Ascending aorta (tissue), 2 donors: ENCODE measurements at regions of chr15 and their contacts with region 1.

Region 1: GRCh38 chr15:76190834-76191538 is 120.3 kb downstream of the ETFA start:
- DNase-seq: peak; percentile 39 to 85
- H3K4me3 ChIP-seq: peak overlapping the region in 1 of 2 donors; percentile 32
- H3K27ac ChIP-seq: no peak overlapping the region
- H3K4me1 ChIP-seq: peaks cover 5% of the 10 kb centered on the region in 2 donors
- H3K27me3 ChIP-seq: no peaks in the 10 kb centered on the region
- CTCF ChIP-seq: peak; percentile 76 to 90 (median 88)

Region 2: DNA sequence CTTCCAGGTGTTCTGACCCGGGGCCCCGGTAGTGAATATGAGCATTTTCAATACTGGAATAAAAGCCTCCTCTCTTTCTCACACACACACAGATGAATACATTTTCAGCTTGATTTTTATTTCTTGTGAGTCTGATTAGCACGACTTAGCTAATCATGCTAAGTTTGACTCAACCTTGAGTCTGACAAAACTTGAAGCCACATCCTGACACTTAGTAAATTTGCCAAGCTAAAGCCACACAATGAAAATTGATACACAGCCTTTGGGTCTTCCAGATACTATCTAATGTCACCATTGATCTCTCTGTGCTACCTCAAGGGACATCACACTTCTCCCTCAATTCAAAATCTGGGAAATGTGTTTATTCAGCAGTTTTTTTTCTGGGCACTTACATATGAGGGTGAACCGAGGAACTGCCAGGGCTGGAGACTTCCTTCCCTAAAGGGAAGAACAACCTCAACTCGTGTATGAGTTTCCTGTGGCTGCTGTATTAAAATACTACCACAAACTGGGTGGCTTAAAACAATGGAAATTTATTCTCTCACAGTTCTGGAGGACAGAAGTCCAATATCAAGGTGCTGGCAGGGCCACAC is 112.6 kb before region 1 on chr15:
- intact Hi-C with region 1: no loop called
- DNase-seq: no peak
- H3K4me3 ChIP-seq: no peak overlapping the region
- H3K27ac ChIP-seq: no peak overlapping the region
- H3K4me1 ChIP-seq: no peaks in the 10 kb centered on the region
- H3K27me3 ChIP-seq: no peaks in the 10 kb centered on the region
- CTCF ChIP-seq: no peak

Region 3: GRCh38 chr15:76330080-76330680 is 139.2 kb after region 1 on chr15:
- intact Hi-C with region 1: loop called (anchors 1 kb)
- DNase-seq: peak in 1 of 2 donors; percentile 80
- H3K4me3 ChIP-seq: no peak overlapping the region
- H3K27ac ChIP-seq: no peak overlapping the region
- H3K4me1 ChIP-seq: no peaks in the 10 kb centered on the region
- H3K27me3 ChIP-seq: peaks cover 11% of the 10 kb centered on the region
- CTCF ChIP-seq: peak; percentile 29 to 74 (median 51)